ENCODE measurements at regions of chr22 and their contacts with region 1.

Region 1: GRCh38 chr22:45163451-45164269 is at the start of gene NUP50:
- DNase-seq: peak; percentile 94 to 99 (median 96)
- ATAC-seq: peak; percentile 92 to 98 (median 95)
- H3K4me3 ChIP-seq: peak within 1 kb of the TSS; percentile 61 to 98 (median 80)
- H3K27ac ChIP-seq: peak within 1 kb of the TSS in 11 of 12 donors; percentile 71 to 95 (median 86)
- H3K4me1 ChIP-seq: peaks cover 0 to 60% (median 29%) of the 10 kb centered on the region in 12 donors
- H3K27me3 ChIP-seq: no peaks in the 10 kb centered on the region
- CTCF ChIP-seq: peak in 2 of 12 donors; percentile 14 to 35
- POLR2A ChIP-seq: peak in 1 of 2 donors; percentile 69
- total RNA-seq, gene NUP50: 11.7 to 42.6 (median 14.4) TPM

Region 2: GRCh38 chr22:45240810-45241631 is 77.4 kb after region 1 on chr22 and contains the start of gene KIAA0930:
- intact Hi-C with region 1: loop called in 4 of 10 experiments (anchors 2 to 10 kb)
- DNase-seq: peak; percentile 84 to 92 (median 84)
- ATAC-seq: peak; percentile 62 to 79 (median 76)
- H3K4me3 ChIP-seq: peak within 1 kb of the TSS; percentile 45 to 86 (median 68)
- H3K27ac ChIP-seq: peak within 1 kb of the TSS in 8 of 12 donors; percentile 17 to 84 (median 41)
- H3K4me1 ChIP-seq: peaks cover 0 to 45% (median 12%) of the 10 kb centered on the region in 12 donors
- H3K27me3 ChIP-seq: no peaks in the 10 kb centered on the region
- CTCF ChIP-seq: no peak
- POLR2A ChIP-seq: no peak
- total RNA-seq, gene KIAA0930: 14.7 to 67.1 (median 18.7) TPM